CD8-positive, alpha-beta memory T cell (primary cell): ENCODE measurements at regions of chr11 and their contacts with region 1.

Region 1: DNA sequence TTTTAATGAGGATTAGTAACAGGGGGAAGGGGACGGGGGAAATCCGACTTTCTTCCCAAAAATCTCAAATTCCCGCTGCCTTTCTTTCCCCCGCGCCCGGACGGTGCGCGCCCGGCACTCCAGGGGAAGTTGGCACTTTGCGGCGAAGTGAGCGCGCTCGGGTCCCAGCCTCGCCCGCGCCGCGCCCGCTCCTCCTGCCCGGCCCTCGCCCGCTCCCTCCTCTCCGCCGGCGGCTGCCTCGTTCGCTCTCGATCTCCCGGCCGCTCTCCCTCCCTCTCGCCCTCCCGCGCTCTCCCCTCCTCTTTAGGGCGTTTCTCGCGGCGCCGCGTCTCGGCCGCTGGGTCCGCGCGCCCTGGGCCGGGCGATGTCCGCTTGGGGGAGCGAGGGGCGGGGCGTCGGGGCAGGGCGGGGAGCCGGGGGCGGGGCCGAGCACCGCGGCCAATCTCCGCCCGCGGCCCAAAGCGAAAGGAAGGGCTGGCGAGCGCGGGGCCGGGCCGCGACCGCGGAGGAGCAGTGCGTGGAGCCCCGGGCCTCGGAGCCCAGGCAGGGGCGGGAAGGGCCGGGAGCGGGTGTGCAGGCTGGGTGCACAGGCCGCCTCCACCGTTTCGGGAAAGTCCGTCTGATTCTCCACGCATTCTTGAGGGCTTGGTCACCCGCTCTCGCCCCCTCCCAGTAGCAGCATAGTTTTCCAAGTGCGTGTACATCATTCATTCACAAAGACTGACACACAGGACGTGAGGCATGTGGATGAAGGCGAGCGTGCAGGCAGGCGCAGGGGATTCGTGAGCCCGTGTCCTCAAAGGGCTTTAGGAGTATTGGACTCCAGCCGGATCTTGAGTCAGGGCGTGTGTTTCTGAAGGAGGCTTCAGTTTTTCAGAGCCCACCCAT is 65.1 kb downstream of the ETS1 start:
- DNase-seq: peak; percentile 78 to 90 (median 86)
- H3K4me3 ChIP-seq: peak overlapping the region; percentile 97
- H3K4me3 Mint-ChIP-seq: peak overlapping the region; percentile 95 to 100 (median 98)
- H3K27ac ChIP-seq: peak overlapping the region; percentile 92
- H3K27ac Mint-ChIP-seq: peak overlapping the region; percentile 91 to 99 (median 98)
- H3K4me1 ChIP-seq: peaks cover 40% of the 10 kb centered on the region
- H3K4me1 Mint-ChIP-seq: peaks cover 45 to 50% (median 49%) of the 10 kb centered on the region in 3 donors
- H3K27me3 ChIP-seq: no peaks in the 10 kb centered on the region
- H3K27me3 Mint-ChIP-seq: peaks cover 0 to 2% of the 10 kb centered on the region in 2 donors

Region 2: GRCh38 chr11:128290106-128290840 is 232.0 kb before region 1 on chr11:
- CTCF ChIA-PET with region 1: interaction called, 10 read pairs
- POLR2A ChIA-PET with region 1: interaction called, 3 read pairs
- DNase-seq: peak; percentile 41 to 84 (median 80)
- H3K4me3 ChIP-seq: peak overlapping the region; percentile 58
- H3K4me3 Mint-ChIP-seq: peak overlapping the region; percentile 88 to 97 (median 93)
- H3K27ac ChIP-seq: peak overlapping the region; percentile 85
- H3K27ac Mint-ChIP-seq: peak overlapping the region; percentile 98 to 100 (median 99)
- H3K4me1 ChIP-seq: peaks cover 84% of the 10 kb centered on the region
- H3K4me1 Mint-ChIP-seq: peaks cover 89 to 99% (median 98%) of the 10 kb centered on the region in 3 donors
- H3K27me3 ChIP-seq: no peaks in the 10 kb centered on the region
- H3K27me3 Mint-ChIP-seq: no peaks in the 10 kb centered on the region

Region 3: GRCh38 chr11:128482512-128483191 is 39.6 kb before region 1 on chr11:
- CTCF ChIA-PET with region 1: interaction called, 13 read pairs
- POLR2A ChIA-PET with region 1: interaction called, 6 read pairs
- DNase-seq: peak in 4 of 5 donors; percentile 57 to 83 (median 78)
- H3K4me3 ChIP-seq: peak overlapping the region; percentile 44
- H3K4me3 Mint-ChIP-seq: peak overlapping the region; percentile 72 to 89 (median 81)
- H3K27ac ChIP-seq: peak overlapping the region; percentile 52
- H3K27ac Mint-ChIP-seq: peak overlapping the region; percentile 82 to 99 (median 96)
- H3K4me1 ChIP-seq: peaks cover 96% of the 10 kb centered on the region
- H3K4me1 Mint-ChIP-seq: peaks cover 96 to 99% (median 97%) of the 10 kb centered on the region in 3 donors
- H3K27me3 ChIP-seq: no peaks in the 10 kb centered on the region
- H3K27me3 Mint-ChIP-seq: peaks cover 0 to 2% of the 10 kb centered on the region in 2 donors

Region 4: GRCh38 chr11:128506999-128507611 is 15.2 kb before region 1 on chr11:
- CTCF ChIA-PET with region 1: interaction called, 33 read pairs
- POLR2A ChIA-PET with region 1: interaction called, 69 read pairs
- DNase-seq: no peak
- H3K4me3 ChIP-seq: peak overlapping the region; percentile 97
- H3K4me3 Mint-ChIP-seq: peak overlapping the region; percentile 81 to 99 (median 98)
- H3K27ac ChIP-seq: peak overlapping the region; percentile 48
- H3K27ac Mint-ChIP-seq: peak overlapping the region; percentile 93 to 99 (median 98)
- H3K4me1 ChIP-seq: peaks cover 99% of the 10 kb centered on the region
- H3K4me1 Mint-ChIP-seq: peaks cover 99 to 100% (median 100%) of the 10 kb centered on the region in 3 donors
- H3K27me3 ChIP-seq: no peaks in the 10 kb centered on the region
- H3K27me3 Mint-ChIP-seq: no peaks in the 10 kb centered on the region

Region 5: DNA sequence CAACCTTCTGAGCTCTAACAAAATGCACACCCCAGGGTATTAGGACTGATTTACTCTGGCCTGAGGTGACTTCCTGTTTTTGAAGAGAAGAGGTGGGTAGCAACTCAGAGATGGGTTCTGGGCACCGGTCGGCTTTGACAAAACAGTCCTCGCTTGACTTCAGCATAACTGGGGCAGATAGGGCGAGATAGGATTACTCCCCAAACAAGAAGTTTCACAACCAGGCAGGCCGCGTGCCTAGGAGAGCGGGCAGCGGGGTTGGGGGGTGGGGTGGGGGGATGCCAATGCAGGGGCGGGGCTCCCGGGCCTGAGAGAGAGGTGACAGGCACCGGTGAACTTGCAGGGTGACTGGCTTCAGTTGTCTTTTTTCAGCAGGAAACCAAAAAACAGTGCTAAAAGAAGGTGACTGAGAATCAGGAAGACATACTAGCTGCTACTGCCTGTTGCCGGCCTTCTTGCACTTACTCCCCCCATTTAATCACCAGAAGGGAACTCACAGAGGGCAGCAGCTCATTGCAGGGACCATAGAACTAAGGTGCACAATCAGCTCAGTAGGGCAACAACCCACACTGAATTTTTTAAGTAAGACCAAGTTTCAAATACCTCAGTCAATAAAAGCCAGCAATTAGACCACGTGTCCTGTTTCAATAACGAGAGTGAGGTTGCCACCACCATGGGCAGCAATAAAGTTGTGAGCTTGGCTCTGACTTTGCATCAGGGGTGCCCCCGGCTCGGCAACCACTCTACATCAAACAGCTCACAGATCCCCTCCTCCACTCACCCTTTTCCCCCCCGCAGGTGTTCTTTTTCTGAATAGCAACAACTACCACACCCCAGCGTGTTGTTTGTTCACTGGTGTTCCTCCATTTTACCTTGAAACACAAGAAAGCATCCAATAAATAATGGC is 102.2 kb after region 1 on chr11:
- CTCF ChIA-PET with region 1: interaction called, 82 read pairs
- POLR2A ChIA-PET with region 1: interaction called, 40 read pairs
- DNase-seq: peak; percentile 55 to 87 (median 71)
- H3K4me3 ChIP-seq: peak overlapping the region; percentile 44
- H3K4me3 Mint-ChIP-seq: peak overlapping the region; percentile 75 to 88 (median 77)
- H3K27ac ChIP-seq: peak overlapping the region; percentile 59
- H3K27ac Mint-ChIP-seq: peak overlapping the region; percentile 93 to 99 (median 98)
- H3K4me1 ChIP-seq: peaks cover 67% of the 10 kb centered on the region
- H3K4me1 Mint-ChIP-seq: peaks cover 90 to 100% (median 99%) of the 10 kb centered on the region in 3 donors
- H3K27me3 ChIP-seq: no peaks in the 10 kb centered on the region
- H3K27me3 Mint-ChIP-seq: peaks cover 0 to 2% of the 10 kb centered on the region in 2 donors